ENCODE measurements at regions of chr5 and their contacts with region 1.

Region 1: DNA sequence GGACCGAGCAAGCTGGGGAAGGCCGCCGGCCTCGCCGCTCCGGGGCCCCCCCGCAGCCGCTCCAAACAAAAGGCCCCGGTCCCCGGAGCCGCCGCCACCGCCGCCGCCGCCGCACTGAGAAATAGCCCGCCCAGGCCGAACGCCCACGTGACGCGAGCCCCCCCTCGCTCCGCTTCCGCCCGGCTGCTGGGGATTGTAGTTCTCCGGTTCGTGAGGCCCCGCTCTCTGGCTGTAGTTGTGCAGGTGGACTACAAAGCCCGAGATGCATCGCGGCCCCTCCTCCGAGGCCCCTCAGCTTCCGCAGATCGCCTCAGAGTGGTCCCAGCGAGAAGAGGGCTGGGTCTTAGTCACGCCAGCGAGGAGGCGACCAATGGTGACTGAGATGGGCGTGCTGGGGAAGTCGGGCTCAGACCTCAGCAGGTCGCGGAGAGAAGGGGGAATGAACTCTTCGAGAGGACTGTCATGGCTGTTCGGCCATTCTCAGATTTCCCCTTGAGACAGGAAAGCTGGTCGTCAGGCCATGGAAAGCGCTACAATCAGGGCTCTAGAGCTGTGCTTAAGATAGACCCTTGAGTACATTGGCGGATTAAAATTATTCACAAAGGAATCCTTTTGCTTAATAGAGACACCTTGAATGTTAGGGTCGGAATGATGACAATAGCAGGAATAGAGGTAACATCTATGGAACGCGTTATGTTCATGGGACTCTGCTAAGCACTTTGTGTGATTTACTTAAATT is 489 bp upstream of the PANK3 start:
- DNase-seq: peak; percentile 90 to 99 (median 95)
- ATAC-seq: peak; percentile 96
- H3K4me3 ChIP-seq: peak overlapping the region; percentile 92
- H3K4me3 Mint-ChIP-seq: peak overlapping the region; percentile 92
- H3K27ac ChIP-seq: peak overlapping the region; percentile 77 to 86
- H3K27ac Mint-ChIP-seq: peak overlapping the region; percentile 89
- H3K4me1 ChIP-seq: peaks cover 28% of the 10 kb centered on the region
- H3K4me1 Mint-ChIP-seq: peaks cover 44% of the 10 kb centered on the region
- H3K27me3 ChIP-seq: no peaks in the 10 kb centered on the region
- H3K27me3 Mint-ChIP-seq: peaks cover 5% of the 10 kb centered on the region
- CTCF ChIP-seq: no peak

Region 2: DNA sequence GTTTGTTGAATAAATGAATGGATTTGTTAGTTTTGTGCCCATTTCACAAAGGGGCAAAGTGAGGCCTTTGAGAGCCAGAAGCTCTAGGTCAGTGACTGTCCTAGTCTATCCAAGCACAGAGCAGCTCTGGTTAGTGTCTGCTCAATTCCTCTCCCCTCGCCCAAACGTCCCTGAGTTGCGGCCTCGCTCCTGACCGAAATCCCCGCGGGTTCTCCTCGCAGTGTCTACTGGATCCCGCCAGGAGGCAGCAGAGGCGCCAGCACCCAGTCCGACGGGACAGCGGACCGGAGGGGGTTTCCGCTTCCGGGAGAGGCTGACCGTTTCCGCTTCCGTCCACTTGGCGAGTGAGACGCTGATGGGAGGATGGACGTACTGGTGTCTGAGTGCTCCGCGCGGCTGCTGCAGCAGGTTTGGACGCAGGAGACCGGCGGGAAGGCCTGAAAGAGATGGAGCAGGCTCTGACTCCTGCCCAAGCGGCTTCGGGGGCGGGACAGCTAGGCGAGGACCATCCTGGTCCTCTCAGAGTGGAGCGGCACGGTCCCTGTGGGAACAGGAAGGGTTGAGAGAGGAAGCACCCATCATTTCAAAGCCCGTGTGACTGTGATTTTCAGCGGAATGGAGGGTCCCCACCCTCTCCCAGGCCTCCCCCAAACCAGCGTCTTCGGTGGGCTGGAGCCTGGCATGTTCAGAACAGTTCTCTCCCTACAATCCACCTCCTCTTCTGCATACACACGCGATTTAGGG is 93.3 kb before region 1 on chr5 and contains the start of gene RARS1:
- CTCF ChIA-PET with region 1: interaction called, 5 read pairs
- POLR2A ChIA-PET with region 1: interaction called, 4 read pairs
- intact Hi-C with region 1: loop called (anchors 1 to 10 kb)
- DNase-seq: peak; percentile 75 to 94 (median 83)
- ATAC-seq: peak; percentile 81
- H3K4me3 ChIP-seq: peak within 1 kb of the TSS; percentile 76
- H3K4me3 Mint-ChIP-seq: peak within 1 kb of the TSS; percentile 97
- H3K27ac ChIP-seq: peak within 1 kb of the TSS; percentile 54 to 64
- H3K27ac Mint-ChIP-seq: peak within 1 kb of the TSS; percentile 83
- H3K4me1 ChIP-seq: peaks cover 15% of the 10 kb centered on the region
- H3K4me1 Mint-ChIP-seq: peaks cover 39% of the 10 kb centered on the region
- H3K27me3 ChIP-seq: no peaks in the 10 kb centered on the region
- H3K27me3 Mint-ChIP-seq: no peaks in the 10 kb centered on the region
- CTCF ChIP-seq: peak; percentile 96
- total RNA-seq, gene RARS1: 67.0 to 67.7 TPM

Region 3: GRCh38 chr5:168612996-168613395 is 33.3 kb after region 1 on chr5:
- CTCF ChIA-PET with region 1: no interaction called
- POLR2A ChIA-PET with region 1: interaction called, 13 read pairs
- intact Hi-C with region 1: no loop called
- DNase-seq: peak in 4 of 14 experiments; percentile 17 to 71 (median 66)
- ATAC-seq: peak; percentile 99
- H3K4me3 ChIP-seq: no peak overlapping the region
- H3K4me3 Mint-ChIP-seq: peak overlapping the region; percentile 12
- H3K27ac ChIP-seq: no peak overlapping the region
- H3K27ac Mint-ChIP-seq: peak overlapping the region; percentile 80
- H3K4me1 ChIP-seq: peaks cover 6% of the 10 kb centered on the region
- H3K4me1 Mint-ChIP-seq: peaks cover 10% of the 10 kb centered on the region
- H3K27me3 ChIP-seq: no peaks in the 10 kb centered on the region
- H3K27me3 Mint-ChIP-seq: no peaks in the 10 kb centered on the region
- CTCF ChIP-seq: no peak

Region 4: GRCh38 chr5:169637085-169637548 is 1057.5 kb after region 1 on chr5 and contains the start of gene DOCK2:
- CTCF ChIA-PET with region 1: no interaction called
- POLR2A ChIA-PET with region 1: interaction called, 6 read pairs
- intact Hi-C with region 1: loop called in 1 of 2 experiments (anchors 5 kb)
- DNase-seq: peak; percentile 26 to 80 (median 62)
- ATAC-seq: peak; percentile 75
- H3K4me3 ChIP-seq: peak within 1 kb of the TSS; percentile 89
- H3K4me3 Mint-ChIP-seq: peak within 1 kb of the TSS; percentile 95
- H3K27ac ChIP-seq: peak within 1 kb of the TSS; percentile 80 to 87
- H3K27ac Mint-ChIP-seq: peak within 1 kb of the TSS; percentile 97
- H3K4me1 ChIP-seq: peaks cover 47% of the 10 kb centered on the region
- H3K4me1 Mint-ChIP-seq: peaks cover 60% of the 10 kb centered on the region
- H3K27me3 ChIP-seq: no peaks in the 10 kb centered on the region
- H3K27me3 Mint-ChIP-seq: no peaks in the 10 kb centered on the region
- CTCF ChIP-seq: no peak
- total RNA-seq, gene DOCK2: 220 to 229 TPM